ENCODE measurements at regions of chr7 and their contacts with region 1.

Region 1: GRCh38 chr7:20598459-20599309 is 16.8 kb upstream of the ABCB5 start:
- DNase-seq: peak; percentile 53 to 72 (median 61)
- H3K4me3 ChIP-seq: peak overlapping the region in 1 of 3 experiments; percentile 45
- H3K4me3 Mint-ChIP-seq: peak overlapping the region in 1 of 2 donors; percentile 65
- H3K27ac ChIP-seq: no peak overlapping the region
- H3K27ac Mint-ChIP-seq: peak overlapping the region in 2 of 7 donors; percentile 47 to 58
- H3K4me1 ChIP-seq: peaks cover 7 to 8% of the 10 kb centered on the region in 2 donors
- H3K4me1 Mint-ChIP-seq: peaks cover 14% of the 10 kb centered on the region
- H3K27me3 ChIP-seq: no peaks in the 10 kb centered on the region
- H3K27me3 Mint-ChIP-seq: peaks cover 0 to 2% (median 0%) of the 10 kb centered on the region in 3 donors
- CTCF ChIP-seq: peak; percentile 95

Region 2: DNA sequence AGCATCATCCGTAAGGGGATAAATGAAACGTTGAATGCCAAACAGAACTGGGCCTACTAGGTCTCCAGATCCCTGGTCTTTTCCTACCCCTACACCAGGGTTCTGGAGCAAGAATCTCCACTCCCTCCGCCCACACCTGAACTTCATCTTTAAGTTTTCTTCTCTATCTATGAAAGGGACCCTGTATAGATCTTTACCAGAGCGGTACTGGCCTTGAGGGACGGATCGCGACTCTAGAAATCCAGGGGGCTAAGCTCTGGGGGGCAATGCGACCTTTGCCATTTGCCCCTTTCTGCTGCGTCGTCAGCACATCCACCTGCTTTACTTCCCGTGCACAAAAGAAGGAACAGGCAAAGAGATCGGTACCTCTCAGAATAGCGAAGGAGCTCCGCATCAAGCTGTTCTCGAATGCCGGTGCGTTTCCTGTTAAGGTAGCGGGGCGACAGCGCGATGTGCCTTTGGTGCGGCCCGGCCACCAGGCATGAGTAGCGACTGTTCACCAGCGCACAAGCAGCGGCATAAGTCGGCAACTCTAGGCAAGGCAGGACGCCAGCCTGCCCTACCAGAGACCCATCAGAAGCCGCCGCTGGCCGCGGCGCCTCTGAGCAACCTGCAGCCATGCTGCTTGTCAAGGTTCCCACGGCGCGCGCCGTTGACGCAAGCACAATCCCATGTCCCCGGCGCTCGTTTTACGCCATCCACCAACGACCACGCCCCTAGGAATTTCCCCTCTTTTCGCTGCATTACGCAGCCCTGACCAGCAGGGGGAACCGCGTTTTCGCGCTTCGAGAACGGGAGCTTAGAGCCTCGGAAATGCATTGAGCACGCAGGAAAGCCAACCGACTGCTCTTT is 890.1 kb before region 1 on chr7 and contains the start of gene POLR1F:
- intact Hi-C with region 1: loop called (anchors 2 to 10 kb)
- DNase-seq: peak; percentile 89 to 95 (median 94)
- H3K4me3 ChIP-seq: peak within 1 kb of the TSS; percentile 88 to 94 (median 93)
- H3K4me3 Mint-ChIP-seq: peak within 1 kb of the TSS; percentile 91 to 95
- H3K27ac ChIP-seq: peak within 1 kb of the TSS; percentile 75 to 91
- H3K27ac Mint-ChIP-seq: peak within 1 kb of the TSS; percentile 91 to 96 (median 94)
- H3K4me1 ChIP-seq: peaks cover 17 to 19% of the 10 kb centered on the region in 2 donors
- H3K4me1 Mint-ChIP-seq: peaks cover 24% of the 10 kb centered on the region
- H3K27me3 ChIP-seq: no peaks in the 10 kb centered on the region
- H3K27me3 Mint-ChIP-seq: peaks cover 0 to 2% (median 2%) of the 10 kb centered on the region in 3 donors
- CTCF ChIP-seq: peak; percentile 89
- polyA plus RNA-seq, gene POLR1F: 11.7 to 17.9 (median 12.4) TPM

Region 3: GRCh38 chr7:19713676-19714075 is 885.0 kb before region 1 on chr7:
- intact Hi-C with region 1: loop called (anchors 2 to 10 kb)
- DNase-seq: peak; percentile 15 to 37 (median 27)
- H3K4me3 ChIP-seq: no peak overlapping the region
- H3K4me3 Mint-ChIP-seq: no peak overlapping the region
- H3K27ac ChIP-seq: no peak overlapping the region
- H3K27ac Mint-ChIP-seq: no peak overlapping the region
- H3K4me1 ChIP-seq: peaks cover 5 to 6% of the 10 kb centered on the region in 2 donors
- H3K4me1 Mint-ChIP-seq: peaks cover 5% of the 10 kb centered on the region
- H3K27me3 ChIP-seq: no peaks in the 10 kb centered on the region
- H3K27me3 Mint-ChIP-seq: peaks cover 2 to 4% (median 2%) of the 10 kb centered on the region in 3 donors
- CTCF ChIP-seq: peak; percentile 76

Region 4: GRCh38 chr7:19747740-19748339 is 850.8 kb before region 1 on chr7:
- intact Hi-C with region 1: loop called (anchors 5 to 10 kb)
- DNase-seq: peak in 1 of 3 donors; percentile 12
- H3K4me3 ChIP-seq: no peak overlapping the region
- H3K4me3 Mint-ChIP-seq: no peak overlapping the region
- H3K27ac ChIP-seq: no peak overlapping the region
- H3K27ac Mint-ChIP-seq: no peak overlapping the region
- H3K4me1 ChIP-seq: no peaks in the 10 kb centered on the region
- H3K4me1 Mint-ChIP-seq: no peaks in the 10 kb centered on the region
- H3K27me3 ChIP-seq: no peaks in the 10 kb centered on the region
- H3K27me3 Mint-ChIP-seq: peaks cover 0 to 5% (median 2%) of the 10 kb centered on the region in 3 donors
- CTCF ChIP-seq: peak; percentile 74

Region 5: GRCh38 chr7:19754521-19755116 is 844.1 kb before region 1 on chr7:
- intact Hi-C with region 1: loop called (anchors 5 to 10 kb)
- DNase-seq: peak; percentile 9 to 42 (median 19)
- H3K4me3 ChIP-seq: no peak overlapping the region
- H3K4me3 Mint-ChIP-seq: no peak overlapping the region
- H3K27ac ChIP-seq: no peak overlapping the region
- H3K27ac Mint-ChIP-seq: no peak overlapping the region
- H3K4me1 ChIP-seq: no peaks in the 10 kb centered on the region
- H3K4me1 Mint-ChIP-seq: no peaks in the 10 kb centered on the region
- H3K27me3 ChIP-seq: no peaks in the 10 kb centered on the region
- H3K27me3 Mint-ChIP-seq: no peaks in the 10 kb centered on the region
- CTCF ChIP-seq: peak; percentile 85

Region 6: DNA sequence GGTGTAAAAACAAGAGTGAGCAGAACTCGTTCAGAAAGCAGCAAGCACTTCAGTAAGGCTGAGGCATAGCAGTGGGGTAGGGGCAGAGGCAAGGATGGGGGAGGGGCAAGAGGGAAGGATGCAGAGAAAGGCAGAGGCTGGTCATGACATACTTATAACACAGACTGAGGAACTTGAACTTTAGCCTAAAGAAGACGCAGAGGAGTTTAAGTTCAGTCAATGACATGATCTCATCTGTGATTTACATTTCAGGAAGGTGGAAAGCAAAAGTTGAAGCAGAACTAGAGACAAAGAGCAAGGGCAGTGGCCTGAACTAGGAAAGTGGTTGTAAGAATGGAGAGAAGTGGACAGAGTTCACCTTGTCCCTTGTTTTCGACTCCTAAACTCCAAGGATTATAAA is 397.3 kb before region 1 on chr7:
- intact Hi-C with region 1: loop called in 1 of 2 experiments (anchors 10 kb)
- DNase-seq: peak; percentile 66 to 82 (median 74)
- H3K4me3 ChIP-seq: no peak overlapping the region
- H3K4me3 Mint-ChIP-seq: peak overlapping the region in 1 of 2 donors; percentile 21
- H3K27ac ChIP-seq: peak overlapping the region; percentile 36 to 86
- H3K27ac Mint-ChIP-seq: peak overlapping the region; percentile 83 to 97 (median 94)
- H3K4me1 ChIP-seq: peaks cover 26 to 40% of the 10 kb centered on the region in 2 donors
- H3K4me1 Mint-ChIP-seq: peaks cover 33% of the 10 kb centered on the region
- H3K27me3 ChIP-seq: no peaks in the 10 kb centered on the region
- H3K27me3 Mint-ChIP-seq: peaks cover 0 to 2% (median 0%) of the 10 kb centered on the region in 3 donors
- CTCF ChIP-seq: no peak

Region 7: GRCh38 chr7:20508109-20508508 is 90.6 kb before region 1 on chr7:
- intact Hi-C with region 1: loop called in 1 of 2 experiments (anchors 10 kb)
- DNase-seq: peak; percentile 75 to 93 (median 83)
- H3K4me3 ChIP-seq: peak overlapping the region in 2 of 3 experiments; percentile 25 to 50
- H3K4me3 Mint-ChIP-seq: peak overlapping the region; percentile 44 to 72
- H3K27ac ChIP-seq: peak overlapping the region in 1 of 2 donors; percentile 75
- H3K27ac Mint-ChIP-seq: peak overlapping the region; percentile 86 to 97 (median 91)
- H3K4me1 ChIP-seq: peaks cover 19 to 30% of the 10 kb centered on the region in 2 donors
- H3K4me1 Mint-ChIP-seq: peaks cover 23% of the 10 kb centered on the region
- H3K27me3 ChIP-seq: no peaks in the 10 kb centered on the region
- H3K27me3 Mint-ChIP-seq: no peaks in the 10 kb centered on the region
- CTCF ChIP-seq: peak; percentile 19

Measured in CD14-positive monocyte (primary cell).